MCF 10A (cell line): ENCODE measurements at regions of chr6 and their contacts with region 1.

Region 1: GRCh38 chr6:25312703-25313501 is 33.7 kb downstream of the CARMIL1 start:
- DNase-seq: peak; percentile 70
- H3K4me3 Mint-ChIP-seq: peak overlapping the region; percentile 69
- H3K27ac Mint-ChIP-seq: peak overlapping the region; percentile 90
- H3K4me1 Mint-ChIP-seq: peaks cover 32% of the 10 kb centered on the region
- H3K27me3 Mint-ChIP-seq: no peaks in the 10 kb centered on the region
- CTCF ChIP-seq: no peak

Region 2: GRCh38 chr6:25217302-25217701 is 95.6 kb before region 1 on chr6:
- CTCF ChIA-PET with region 1: no interaction called
- POLR2A ChIA-PET with region 1: no interaction called
- intact Hi-C with region 1: no loop called
- DNase-seq: no peak
- H3K4me3 Mint-ChIP-seq: no peak overlapping the region
- H3K27ac Mint-ChIP-seq: no peak overlapping the region
- H3K4me1 Mint-ChIP-seq: peaks cover 22% of the 10 kb centered on the region
- H3K27me3 Mint-ChIP-seq: no peaks in the 10 kb centered on the region
- CTCF ChIP-seq: no peak

Region 3: DNA sequence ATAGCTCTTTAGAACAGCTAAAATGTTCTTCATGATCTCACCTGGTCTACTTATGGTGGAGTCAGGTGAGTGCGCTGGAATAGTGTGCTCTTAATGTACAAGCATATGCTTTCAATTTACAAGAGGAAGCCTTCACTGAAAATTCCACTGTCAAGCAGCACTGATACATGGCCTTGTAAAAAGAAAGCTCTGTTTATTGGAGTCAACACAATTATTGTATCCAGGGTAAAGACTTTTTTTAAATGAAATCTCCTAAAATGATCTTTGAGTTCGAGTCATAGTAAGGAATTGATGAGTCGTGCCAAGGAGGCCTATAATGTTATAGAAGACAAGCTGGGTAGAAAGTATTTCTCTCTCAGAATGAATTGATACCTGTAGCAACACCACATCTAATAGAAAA is 75.3 kb before region 1 on chr6:
- CTCF ChIA-PET with region 1: no interaction called
- POLR2A ChIA-PET with region 1: no interaction called
- intact Hi-C with region 1: no loop called
- DNase-seq: no peak
- H3K4me3 Mint-ChIP-seq: no peak overlapping the region
- H3K27ac Mint-ChIP-seq: no peak overlapping the region
- H3K4me1 Mint-ChIP-seq: no peaks in the 10 kb centered on the region
- H3K27me3 Mint-ChIP-seq: no peaks in the 10 kb centered on the region
- CTCF ChIP-seq: no peak

Region 4: GRCh38 chr6:25324066-25324762 is 11.3 kb after region 1 on chr6:
- CTCF ChIA-PET with region 1: interaction called, 8 read pairs
- POLR2A ChIA-PET with region 1: interaction called, 11 read pairs
- intact Hi-C with region 1: no loop called
- DNase-seq: no peak
- H3K4me3 Mint-ChIP-seq: no peak overlapping the region
- H3K27ac Mint-ChIP-seq: peak overlapping the region; percentile 2
- H3K4me1 Mint-ChIP-seq: peaks cover 5% of the 10 kb centered on the region
- H3K27me3 Mint-ChIP-seq: no peaks in the 10 kb centered on the region
- CTCF ChIP-seq: no peak